ENCODE measurements at regions of chr12 and their contacts with region 1.

Region 1: GRCh38 chr12:124401704-124402221 is 106.9 kb downstream of the RFLNA start:
- DNase-seq: no peak

Region 2: DNA sequence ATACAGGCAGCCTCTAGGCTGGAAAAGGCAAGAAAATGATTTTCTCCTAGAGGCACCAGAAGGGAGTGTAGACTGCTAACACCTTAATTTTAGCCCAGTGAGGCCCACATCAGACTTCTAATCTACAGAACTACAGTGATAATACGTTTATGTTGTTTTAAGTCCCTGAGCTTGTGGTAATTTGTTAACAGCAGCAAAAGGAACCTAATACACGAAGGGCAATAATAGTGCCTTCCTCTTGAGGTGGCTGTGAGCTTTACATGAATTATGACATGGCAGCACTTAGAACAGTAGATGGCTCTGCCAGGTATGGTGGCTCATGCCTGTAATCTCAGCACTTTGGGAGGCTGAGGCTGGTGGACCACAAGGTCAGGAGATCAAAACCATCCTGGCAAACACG is 309.9 kb before region 1 on chr12:
- CTCF ChIA-PET with region 1: interaction called, 10 read pairs
- POLR2A ChIA-PET with region 1: no interaction called
- DNase-seq: no peak

Measured in HEK293T (cell line).